Panc1 (cell line): ENCODE measurements at regions of chr14 and their contacts with region 1.

Region 1: GRCh38 chr14:105005929-105006830 is 14.7 kb downstream of the CDCA4 start:
- DNase-seq: no peak
- ATAC-seq: peak; percentile 52
- H3K4me3 ChIP-seq: no peak overlapping the region
- H3K27ac ChIP-seq: no peak overlapping the region
- H3K4me1 ChIP-seq: no peaks in the 10 kb centered on the region
- H3K27me3 ChIP-seq: no peaks in the 10 kb centered on the region
- CTCF ChIP-seq: no peak

Region 2: GRCh38 chr14:104676130-104676679 is 330.0 kb before region 1 on chr14:
- CTCF ChIA-PET with region 1: no interaction called
- POLR2A ChIA-PET with region 1: interaction called, 12 read pairs
- in situ Hi-C with region 1: no loop called
- intact Hi-C with region 1: no loop called
- DNase-seq: no peak
- ATAC-seq: no peak
- H3K4me3 ChIP-seq: no peak overlapping the region
- H3K27ac ChIP-seq: peak overlapping the region; percentile 97
- H3K4me1 ChIP-seq: peaks cover 54% of the 10 kb centered on the region
- H3K27me3 ChIP-seq: no peaks in the 10 kb centered on the region
- CTCF ChIP-seq: no peak